GM10248 (cell line): ENCODE measurements at regions of chrX and their contacts with region 1.

Region 1: DNA sequence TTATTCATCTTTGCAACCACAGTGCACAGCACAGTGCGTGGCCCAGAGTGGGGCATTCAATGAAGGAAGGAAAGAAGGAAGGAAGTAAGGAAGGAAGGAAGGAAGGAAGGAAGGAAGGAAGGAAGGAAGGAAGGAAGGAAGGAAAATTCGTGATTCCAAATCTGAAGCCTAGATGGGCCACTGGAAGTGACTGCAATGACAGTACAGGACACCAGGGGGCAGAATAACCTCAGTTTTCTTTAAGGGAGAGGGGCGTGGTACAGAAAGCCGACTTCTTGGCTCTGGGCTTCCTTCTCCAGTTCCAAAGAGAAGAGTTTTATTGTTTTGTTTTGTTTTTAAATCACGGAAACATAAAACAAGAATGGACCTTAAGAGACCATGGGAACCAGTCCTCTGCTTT is 47.8 kb downstream of the APLN start:
- DNase-seq: peak; percentile 71
- CTCF ChIP-seq: peak; percentile 60

Region 2: DNA sequence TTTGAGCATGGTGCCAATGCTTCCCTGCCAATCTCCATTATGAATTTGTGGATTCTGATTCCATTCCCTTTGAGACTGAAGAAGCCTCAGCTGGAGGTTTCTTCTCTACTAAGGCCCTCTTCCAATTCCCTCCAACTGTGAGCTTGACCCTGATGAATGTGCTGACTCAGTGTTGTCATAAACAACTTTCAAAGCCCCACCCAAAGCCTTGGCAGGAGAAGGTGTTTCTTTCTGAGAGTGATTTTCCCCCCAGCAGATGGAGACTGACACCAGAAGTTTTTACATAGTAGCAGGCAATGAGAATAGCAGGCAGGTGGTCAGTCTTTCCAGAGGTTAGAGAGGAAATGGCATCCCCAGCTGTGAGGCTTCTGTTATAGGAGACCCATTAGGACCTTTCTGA is 13.8 kb before region 1 on chrX:
- CTCF ChIA-PET with region 1: interaction called, 16 read pairs
- POLR2A ChIA-PET with region 1: no interaction called
- DNase-seq: no peak
- CTCF ChIP-seq: no peak

Region 3: GRCh38 chrX:129781134-129781672 is 174.3 kb after region 1 on chrX:
- CTCF ChIA-PET with region 1: interaction called, 10 read pairs
- POLR2A ChIA-PET with region 1: no interaction called
- DNase-seq: peak; percentile 81
- CTCF ChIP-seq: no peak